ENCODE measurements at regions of chr21 and their contacts with region 1.

Region 1: GRCh38 chr21:38913120-38913892 is 107.6 kb downstream of the ETS2 start:
- DNase-seq: peak; percentile 61
- ATAC-seq: no peak
- H3K4me3 Mint-ChIP-seq: no peak overlapping the region
- H3K27ac Mint-ChIP-seq: no peak overlapping the region
- H3K4me1 Mint-ChIP-seq: peaks cover 18% of the 10 kb centered on the region
- H3K27me3 Mint-ChIP-seq: peaks cover 15% of the 10 kb centered on the region

Region 2: GRCh38 chr21:38839328-38840286 is 73.7 kb before region 1 on chr21:
- CTCF ChIA-PET with region 1: no interaction called
- POLR2A ChIA-PET with region 1: no interaction called
- intact Hi-C with region 1: loop called in 1 of 2 experiments (anchors 5 kb)
- DNase-seq: peak; percentile 68
- ATAC-seq: peak; percentile 83
- H3K4me3 Mint-ChIP-seq: no peak overlapping the region
- H3K27ac Mint-ChIP-seq: peak overlapping the region; percentile 66
- H3K4me1 Mint-ChIP-seq: peaks cover 28% of the 10 kb centered on the region
- H3K27me3 Mint-ChIP-seq: no peaks in the 10 kb centered on the region

Region 3: GRCh38 chr21:38888991-38889561 is 24.2 kb before region 1 on chr21:
- CTCF ChIA-PET with region 1: no interaction called
- POLR2A ChIA-PET with region 1: no interaction called
- intact Hi-C with region 1: no loop called
- DNase-seq: no peak
- ATAC-seq: no peak
- H3K4me3 Mint-ChIP-seq: no peak overlapping the region
- H3K27ac Mint-ChIP-seq: no peak overlapping the region
- H3K4me1 Mint-ChIP-seq: peaks cover 2% of the 10 kb centered on the region
- H3K27me3 Mint-ChIP-seq: peaks cover 22% of the 10 kb centered on the region

Region 4: DNA sequence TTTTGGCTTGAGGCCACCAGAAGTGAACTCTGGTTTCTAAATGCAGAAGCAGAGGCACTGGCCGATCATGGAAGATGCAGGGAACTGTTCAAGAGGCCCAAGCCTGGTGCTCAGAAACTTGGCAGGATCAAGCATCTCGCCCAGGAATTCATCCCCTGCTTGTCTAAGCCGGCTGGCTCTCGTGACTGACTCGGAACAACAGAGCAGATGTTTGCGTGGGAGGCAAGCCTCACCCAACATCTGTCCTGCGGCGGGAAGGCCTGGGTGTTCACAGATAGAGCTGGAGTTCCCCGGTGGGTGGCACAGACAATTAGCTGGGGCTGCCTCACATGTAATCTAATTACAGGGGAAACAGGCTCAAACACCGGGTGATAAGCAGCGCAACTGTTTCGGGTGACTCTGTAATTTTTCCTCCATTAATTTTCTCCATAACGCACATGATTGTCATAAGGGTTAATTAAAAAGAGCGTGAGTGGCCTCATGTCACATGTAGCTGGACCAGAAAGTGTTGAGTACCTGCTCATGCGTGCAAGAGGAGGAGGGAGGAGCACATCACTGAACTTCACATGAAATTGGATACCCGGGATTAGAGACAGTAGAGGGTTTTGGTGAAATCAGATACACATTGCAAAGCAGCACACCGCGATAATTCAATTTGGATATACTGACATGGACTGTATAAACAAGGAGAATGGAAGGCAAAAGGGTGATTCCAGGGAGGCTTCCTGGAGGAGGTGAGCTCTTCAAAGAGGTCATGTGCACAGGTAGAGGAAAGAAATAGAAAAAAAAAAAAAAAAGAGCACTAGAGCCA is 72.5 kb after region 1 on chr21:
- CTCF ChIA-PET with region 1: no interaction called
- POLR2A ChIA-PET with region 1: no interaction called
- intact Hi-C with region 1: loop called (anchors 2 to 10 kb)
- DNase-seq: peak; percentile 85
- ATAC-seq: peak; percentile 84
- H3K4me3 Mint-ChIP-seq: peak overlapping the region; percentile 51
- H3K27ac Mint-ChIP-seq: peak overlapping the region; percentile 85
- H3K4me1 Mint-ChIP-seq: peaks cover 21% of the 10 kb centered on the region
- H3K27me3 Mint-ChIP-seq: peaks cover 60% of the 10 kb centered on the region

Region 5: GRCh38 chr21:39499156-39499555 is 585.9 kb after region 1 on chr21:
- CTCF ChIA-PET with region 1: no interaction called
- POLR2A ChIA-PET with region 1: no interaction called
- intact Hi-C with region 1: no loop called
- DNase-seq: no peak
- ATAC-seq: no peak
- H3K4me3 Mint-ChIP-seq: no peak overlapping the region
- H3K27ac Mint-ChIP-seq: no peak overlapping the region
- H3K4me1 Mint-ChIP-seq: no peaks in the 10 kb centered on the region
- H3K27me3 Mint-ChIP-seq: peaks cover 2% of the 10 kb centered on the region

Measured in activated CD4-positive, alpha-beta T cell treated with anti-CD3 and anti-CD28 coated beads for 36 hours (primary cell).